HepG2 (cell line): ENCODE measurements at regions of chr14 and their contacts with region 1.

Region 1: GRCh38 chr14:24806061-24806678 is 172.2 kb upstream of the GZMB start:
- DNase-seq: peak; percentile 88
- ATAC-seq: peak; percentile 81
- H3K4me3 ChIP-seq: no peak overlapping the region
- H3K27ac ChIP-seq: no peak overlapping the region
- H3K4me1 ChIP-seq: peaks cover 58% of the 10 kb centered on the region
- H3K27me3 ChIP-seq: no peaks in the 10 kb centered on the region
- CTCF ChIP-seq: peak; percentile 99
- EP300 ChIP-seq: no peak
- POLR2A ChIP-seq: no peak
- RAD21 ChIP-seq: peak; percentile 99

Region 2: GRCh38 chr14:24900269-24901100 is 94.3 kb after region 1 on chr14:
- CTCF ChIA-PET with region 1: no interaction called
- POLR2A ChIA-PET with region 1: no interaction called
- in situ Hi-C with region 1: no loop called
- intact Hi-C with region 1: no loop called
- DNase-seq: no peak
- ATAC-seq: no peak
- H3K4me3 ChIP-seq: no peak overlapping the region
- H3K27ac ChIP-seq: no peak overlapping the region
- H3K4me1 ChIP-seq: peaks cover 6% of the 10 kb centered on the region; the same call in 1 of the 2 replicates
- H3K27me3 ChIP-seq: no peaks in the 10 kb centered on the region; a peak in 1 of 5 replicates
- CTCF ChIP-seq: no peak
- EP300 ChIP-seq: no peak
- POLR2A ChIP-seq: no peak
- RAD21 ChIP-seq: no peak

Region 3: GRCh38 chr14:24952851-24953666 is 146.9 kb after region 1 on chr14:
- CTCF ChIA-PET with region 1: interaction called, 12 read pairs
- POLR2A ChIA-PET with region 1: no interaction called
- in situ Hi-C with region 1: no loop called
- intact Hi-C with region 1: loop called (anchors 1 kb)
- DNase-seq: peak; percentile 81
- ATAC-seq: peak; percentile 99
- H3K4me3 ChIP-seq: no peak overlapping the region
- H3K27ac ChIP-seq: no peak overlapping the region
- H3K4me1 ChIP-seq: peaks cover 15% of the 10 kb centered on the region; the same call in 1 of the 2 replicates
- H3K27me3 ChIP-seq: no peaks in the 10 kb centered on the region
- CTCF ChIP-seq: peak; percentile 67
- EP300 ChIP-seq: no peak
- POLR2A ChIP-seq: no peak
- RAD21 ChIP-seq: peak; percentile 72; the same call in 1 of the 2 replicates

Region 4: DNA sequence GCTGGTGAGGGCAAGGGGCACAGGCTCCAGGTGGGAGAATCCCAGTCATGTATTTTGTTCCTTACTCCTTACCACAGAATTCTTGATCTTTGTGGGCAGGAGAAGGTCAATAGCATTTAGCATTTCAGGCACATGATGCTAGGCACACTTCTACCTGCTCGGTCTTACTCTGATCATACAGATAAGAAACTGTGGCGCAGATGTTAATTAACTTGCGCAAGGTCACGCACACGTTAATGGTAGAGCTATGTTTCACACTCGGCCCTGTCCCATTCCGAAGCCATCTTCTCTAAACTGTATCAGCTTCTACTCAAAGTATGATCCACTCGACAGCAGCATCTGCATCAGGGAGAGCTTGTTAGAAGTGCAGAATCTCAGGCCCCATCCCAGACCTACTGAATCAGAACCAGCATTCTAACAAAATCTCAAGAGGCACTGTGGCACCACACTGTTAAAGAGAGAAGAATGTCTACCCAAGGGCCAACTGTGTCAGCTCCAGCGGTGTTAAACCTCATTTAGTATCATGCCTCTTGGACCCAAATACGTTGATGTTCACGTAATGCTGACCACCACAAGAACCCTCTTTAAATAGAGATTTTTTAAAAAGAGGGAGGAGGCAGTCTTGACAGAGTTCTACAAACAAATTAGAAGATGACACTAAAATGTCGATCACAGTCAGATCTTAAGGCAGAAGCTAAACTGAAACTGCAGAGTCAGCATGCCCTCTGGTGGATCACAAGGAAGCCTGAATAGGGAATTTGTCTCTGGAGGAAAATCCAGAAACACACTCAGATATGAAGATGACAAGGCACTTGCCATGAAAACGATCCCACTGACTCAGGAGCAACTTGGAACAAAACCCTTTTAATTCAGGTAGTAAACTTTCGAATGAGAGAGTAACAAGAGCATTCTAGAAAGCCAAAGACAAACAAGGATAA is 236.5 kb after region 1 on chr14:
- CTCF ChIA-PET with region 1: interaction called, 31 read pairs
- POLR2A ChIA-PET with region 1: no interaction called
- in situ Hi-C with region 1: loop called (anchors 5 kb)
- intact Hi-C with region 1: loop called (anchors 1 kb)
- DNase-seq: peak; percentile 75
- ATAC-seq: peak; percentile 63
- H3K4me3 ChIP-seq: no peak overlapping the region
- H3K27ac ChIP-seq: no peak overlapping the region
- H3K4me1 ChIP-seq: peaks cover 41% of the 10 kb centered on the region
- H3K27me3 ChIP-seq: no peaks in the 10 kb centered on the region
- CTCF ChIP-seq: peak; percentile 89
- EP300 ChIP-seq: no peak
- POLR2A ChIP-seq: no peak
- RAD21 ChIP-seq: peak; percentile 86